A549 (cell line): ENCODE measurements at regions of chr1 and their contacts with region 1.

Region 1: DNA sequence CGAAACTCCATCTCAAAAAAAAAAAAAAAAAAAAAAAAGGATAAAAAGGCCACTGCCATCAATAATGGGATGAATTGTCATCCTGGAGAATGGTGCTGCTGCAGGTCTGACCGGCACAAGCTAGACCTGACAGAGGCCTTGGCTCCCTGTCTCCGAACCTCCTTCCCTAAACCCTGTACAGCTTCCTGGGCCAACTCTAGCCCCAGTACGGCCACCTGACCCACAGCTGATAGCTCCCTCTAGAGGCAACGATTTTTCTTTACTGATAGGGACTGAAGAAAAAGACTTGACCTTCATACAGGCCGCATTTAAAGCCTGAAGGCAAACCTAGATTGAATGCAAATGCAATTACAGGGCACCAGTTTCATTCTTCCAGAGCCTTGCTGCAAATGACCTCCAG is 30.7 kb downstream of the NOL9 start:
- DNase-seq: peak; percentile 48 to 64
- ATAC-seq: peak; percentile 86
- H3K4me3 ChIP-seq: no peak overlapping the region
- H3K27ac ChIP-seq: no peak overlapping the region
- H3K4me1 ChIP-seq: no peaks in the 10 kb centered on the region
- CTCF ChIP-seq: peak; percentile 43; the same call in 2 of the 3 replicates
- EP300 ChIP-seq: no peak
- POLR2A ChIP-seq: no peak
- RAD21 ChIP-seq: peak; percentile 14 to 42; a peak in 2 of 5 replicates

Region 2: GRCh38 chr1:6423321-6423999 is 100.1 kb before region 1 on chr1:
- CTCF ChIA-PET with region 1: no interaction called
- POLR2A ChIA-PET with region 1: no interaction called
- DNase-seq: peak in 1 of 2 experiments; percentile 52
- ATAC-seq: peak; percentile 60 to 78
- H3K4me3 ChIP-seq: peak overlapping the region; percentile 35; the same call in 2 of the 3 replicates
- H3K27ac ChIP-seq: peak overlapping the region in 1 of 2 experiments; percentile 38; a peak in 1 of 6 replicates
- H3K4me1 ChIP-seq: peaks cover 19% of the 10 kb centered on the region
- CTCF ChIP-seq: peak; percentile 54
- EP300 ChIP-seq: no peak
- POLR2A ChIP-seq: no peak
- RAD21 ChIP-seq: peak in 1 of 2 experiments; percentile 21; a peak in 2 of 5 replicates

Region 3: DNA sequence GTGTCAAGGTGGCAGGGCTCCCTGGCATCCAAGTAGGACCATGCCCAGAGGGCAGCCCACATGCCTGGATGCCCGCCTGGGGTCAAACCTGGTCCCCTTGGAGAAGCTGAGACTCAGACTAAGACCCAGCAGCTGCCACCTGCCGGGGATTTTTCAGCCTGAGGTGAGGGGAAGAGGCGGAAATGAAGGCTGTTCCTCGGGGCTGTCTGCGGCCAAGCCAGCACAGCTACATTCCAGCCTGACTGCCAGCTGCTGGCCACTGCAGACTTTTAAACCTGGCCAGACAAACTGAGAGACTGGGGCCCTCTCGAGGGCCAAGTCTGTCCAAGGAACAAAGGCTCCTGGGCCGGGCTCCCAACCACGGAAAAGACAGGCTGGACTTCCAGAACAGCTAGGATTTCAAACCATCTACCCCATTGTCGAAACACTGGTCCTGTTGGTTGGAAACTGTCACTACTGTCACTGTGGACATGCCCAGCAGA is 10.2 kb before region 1 on chr1:
- CTCF ChIA-PET with region 1: interaction called, 11 read pairs
- POLR2A ChIA-PET with region 1: no interaction called
- DNase-seq: no peak
- ATAC-seq: no peak
- H3K4me3 ChIP-seq: no peak overlapping the region
- H3K27ac ChIP-seq: no peak overlapping the region
- H3K4me1 ChIP-seq: no peaks in the 10 kb centered on the region
- CTCF ChIP-seq: no peak
- EP300 ChIP-seq: no peak
- POLR2A ChIP-seq: no peak
- RAD21 ChIP-seq: no peak

Region 4: DNA sequence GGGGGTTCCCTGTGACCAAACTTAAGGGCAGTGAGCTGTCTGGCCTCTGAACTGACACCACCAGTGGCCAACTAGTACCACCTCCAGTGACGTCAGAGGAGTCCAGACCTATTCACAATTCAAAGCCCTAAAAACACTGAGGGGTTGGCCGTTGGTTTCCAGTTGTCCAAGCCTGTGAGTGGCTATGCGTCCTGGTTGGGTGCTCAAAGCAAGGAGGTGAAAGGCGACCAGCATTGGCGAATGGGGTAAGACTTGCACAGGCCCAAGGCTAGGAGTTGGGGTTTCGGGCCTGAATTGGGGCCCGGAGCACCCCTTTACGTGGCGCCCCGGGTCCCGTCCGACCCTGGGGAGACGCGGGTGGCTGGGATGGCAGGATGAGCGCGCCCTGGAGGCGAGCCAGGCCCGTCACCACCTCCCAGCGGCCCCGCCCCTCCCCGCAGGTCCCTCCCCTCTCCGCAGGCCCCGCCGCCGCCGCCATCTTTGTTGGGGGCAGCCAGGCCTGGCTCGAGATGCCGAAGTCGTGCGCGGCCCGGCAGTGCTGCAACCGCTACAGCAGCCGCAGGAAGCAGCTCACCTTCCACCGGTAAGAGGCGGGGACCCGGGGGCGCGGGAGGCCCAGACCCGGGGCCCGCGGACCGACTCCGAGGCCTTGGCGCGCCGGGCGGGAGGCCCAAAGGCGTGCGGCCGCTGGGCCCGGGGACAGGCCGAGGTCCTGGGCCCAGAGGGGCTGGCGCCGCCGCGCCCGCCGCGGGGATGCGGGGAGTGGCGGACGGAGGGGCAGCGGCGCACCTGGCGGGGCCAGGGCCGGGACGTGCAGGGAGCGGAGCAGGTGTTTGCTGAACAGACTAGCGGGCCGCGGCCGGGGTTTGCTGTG is 101.4 kb after region 1 on chr1 and contains the start of gene THAP3:
- CTCF ChIA-PET with region 1: no interaction called
- POLR2A ChIA-PET with region 1: no interaction called
- DNase-seq: peak; percentile 79 to 91
- ATAC-seq: peak; percentile 93 to 95
- H3K4me3 ChIP-seq: peak within 1 kb of the TSS; percentile 71
- H3K27ac ChIP-seq: peak within 1 kb of the TSS; percentile 84 to 98
- H3K4me1 ChIP-seq: peaks cover 12% of the 10 kb centered on the region; the same call in 2 of the 3 replicates
- CTCF ChIP-seq: no peak
- EP300 ChIP-seq: no peak
- POLR2A ChIP-seq: peak; percentile 32; the same call in 1 of the 2 replicates
- RAD21 ChIP-seq: no peak
- polyA plus RNA-seq, gene THAP3: 6.5 and 7.2 TPM in 2 replicates